Motor neuron (in vitro differentiated cells): ENCODE measurements at regions of chr12 and their contacts with region 1.

Region 1: GRCh38 chr12:94074980-94075928 is 73.1 kb upstream of the PLXNC1 start:
- ATAC-seq: peak; percentile 48 to 98 (median 71)
- H3K4me3 ChIP-seq: no peak overlapping the region
- H3K27ac ChIP-seq: no peak overlapping the region
- H3K4me1 ChIP-seq: peaks cover 0 to 3% of the 10 kb centered on the region in 2 donors

Region 2: GRCh38 chr12:93569656-93570551 is 505.4 kb before region 1 on chr12:
- in situ Hi-C with region 1: loop called in 1 of 9 experiments (anchors 25 kb)
- ATAC-seq: peak; percentile 40 to 67 (median 62)
- H3K4me3 ChIP-seq: peak overlapping the region; percentile 54 to 87 (median 58)
- H3K27ac ChIP-seq: peak overlapping the region; percentile 26 to 69
- H3K4me1 ChIP-seq: peaks cover 0 to 11% of the 10 kb centered on the region in 2 donors

Region 3: DNA sequence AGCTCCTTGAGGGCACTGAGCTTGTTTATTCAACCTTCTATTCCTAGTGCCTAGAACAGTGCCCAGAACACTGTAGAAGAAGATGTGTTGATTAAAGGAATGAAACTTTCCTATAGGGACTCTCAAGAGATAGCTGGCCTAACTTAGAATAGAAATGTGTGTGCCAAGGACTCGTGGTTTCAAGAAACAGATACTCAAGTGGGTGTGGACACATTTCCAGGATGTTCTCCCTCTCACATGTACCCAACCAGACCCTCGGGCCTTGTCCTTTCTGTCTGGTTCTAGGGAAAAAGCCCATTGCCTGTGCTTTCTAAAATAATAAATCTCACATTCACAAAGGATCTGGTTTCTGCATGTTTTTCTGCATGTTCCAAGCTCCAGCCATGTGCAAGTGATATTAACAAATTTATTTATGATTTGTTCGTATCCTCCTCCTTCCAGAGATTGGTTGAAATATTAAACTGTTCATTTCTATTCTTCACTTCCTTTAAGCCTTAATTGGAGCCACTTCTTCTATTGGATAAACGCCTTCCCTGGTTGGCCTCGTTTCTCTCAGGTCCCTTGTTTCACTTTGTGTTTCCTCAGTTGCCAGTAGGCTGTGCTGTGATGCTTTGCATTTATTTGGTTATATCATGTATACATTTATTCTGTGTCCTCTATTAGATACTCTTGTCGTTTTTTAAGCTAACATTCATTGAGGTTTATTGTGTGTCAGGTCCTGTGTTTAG is 308.3 kb before region 1 on chr12:
- in situ Hi-C with region 1: loop called in 2 of 9 experiments (anchors 25 kb)
- ATAC-seq: peak in 3 of 8 experiments; percentile 59 to 87 (median 78)
- H3K4me3 ChIP-seq: no peak overlapping the region
- H3K27ac ChIP-seq: no peak overlapping the region
- H3K4me1 ChIP-seq: peaks cover 16 to 23% of the 10 kb centered on the region in 2 donors

Region 4: DNA sequence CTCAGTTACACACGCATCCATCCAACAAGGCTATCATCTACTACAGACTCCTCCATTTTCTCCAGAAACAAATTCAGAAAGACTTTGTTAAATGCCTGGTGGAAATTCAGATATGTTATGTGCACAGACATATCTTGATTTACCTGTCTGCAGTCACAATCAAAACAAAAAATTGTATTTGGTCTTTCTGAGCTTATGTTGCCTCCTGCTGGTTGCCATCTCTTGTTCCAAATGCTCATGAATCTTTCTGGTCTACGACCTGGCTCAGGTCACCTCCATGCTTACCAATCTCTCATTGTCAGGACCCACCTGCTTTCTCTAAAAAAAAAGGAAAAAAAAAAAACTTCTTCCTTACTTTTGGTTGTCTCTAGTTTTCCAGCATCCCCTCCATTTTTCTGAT is 96.1 kb before region 1 on chr12:
- in situ Hi-C with region 1: loop called in 2 of 9 experiments (anchors 25 kb)
- ATAC-seq: no peak
- H3K4me3 ChIP-seq: no peak overlapping the region
- H3K27ac ChIP-seq: no peak overlapping the region
- H3K4me1 ChIP-seq: peaks cover 0 to 11% of the 10 kb centered on the region in 2 donors

Region 5: DNA sequence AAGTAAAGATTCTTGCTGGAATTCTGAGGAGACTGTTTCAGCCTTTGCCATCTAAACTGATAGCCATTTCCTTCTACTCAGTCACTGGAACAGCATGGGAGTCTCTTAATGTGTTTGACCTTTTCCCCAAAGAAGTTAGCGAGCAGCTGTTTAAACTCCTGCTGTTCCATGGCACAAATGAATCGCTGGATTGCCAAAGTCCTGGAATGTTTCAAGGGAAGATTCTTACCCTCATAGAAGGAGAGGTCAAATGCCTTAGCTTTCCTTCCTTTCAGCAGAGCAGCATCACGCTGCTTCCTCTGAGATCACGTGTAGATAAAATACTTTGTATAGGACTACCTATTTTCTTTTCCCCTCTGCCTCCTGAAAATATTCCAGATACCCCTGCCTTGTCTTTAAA is 1008.7 kb after region 1 on chr12:
- in situ Hi-C with region 1: no loop called
- ATAC-seq: peak in 4 of 8 experiments; percentile 27 to 74 (median 44)
- H3K4me3 ChIP-seq: no peak overlapping the region
- H3K27ac ChIP-seq: no peak overlapping the region
- H3K4me1 ChIP-seq: peaks cover 7 to 9% of the 10 kb centered on the region in 2 donors